MCF 10A (cell line): ENCODE measurements at regions of chr1 and their contacts with region 1.

Region 1: GRCh38 chr1:152577168-152577567 is 3.1 kb downstream of the LCE3D start:
- DNase-seq: no peak
- H3K4me3 Mint-ChIP-seq: no peak overlapping the region
- H3K27ac Mint-ChIP-seq: no peak overlapping the region
- H3K4me1 Mint-ChIP-seq: peaks cover 12% of the 10 kb centered on the region
- H3K27me3 Mint-ChIP-seq: no peaks in the 10 kb centered on the region
- CTCF ChIP-seq: no peak

Region 2: GRCh38 chr1:152623203-152623844 is 46.2 kb after region 1 on chr1:
- CTCF ChIA-PET with region 1: interaction called, 18 read pairs
- POLR2A ChIA-PET with region 1: interaction called, 3 read pairs
- intact Hi-C with region 1: no loop called
- DNase-seq: no peak
- H3K4me3 Mint-ChIP-seq: no peak overlapping the region
- H3K27ac Mint-ChIP-seq: no peak overlapping the region
- H3K4me1 Mint-ChIP-seq: peaks cover 8% of the 10 kb centered on the region
- H3K27me3 Mint-ChIP-seq: no peaks in the 10 kb centered on the region
- CTCF ChIP-seq: peak; percentile 46